ENCODE measurements at regions of chr6 and their contacts with region 1.

Region 1: DNA sequence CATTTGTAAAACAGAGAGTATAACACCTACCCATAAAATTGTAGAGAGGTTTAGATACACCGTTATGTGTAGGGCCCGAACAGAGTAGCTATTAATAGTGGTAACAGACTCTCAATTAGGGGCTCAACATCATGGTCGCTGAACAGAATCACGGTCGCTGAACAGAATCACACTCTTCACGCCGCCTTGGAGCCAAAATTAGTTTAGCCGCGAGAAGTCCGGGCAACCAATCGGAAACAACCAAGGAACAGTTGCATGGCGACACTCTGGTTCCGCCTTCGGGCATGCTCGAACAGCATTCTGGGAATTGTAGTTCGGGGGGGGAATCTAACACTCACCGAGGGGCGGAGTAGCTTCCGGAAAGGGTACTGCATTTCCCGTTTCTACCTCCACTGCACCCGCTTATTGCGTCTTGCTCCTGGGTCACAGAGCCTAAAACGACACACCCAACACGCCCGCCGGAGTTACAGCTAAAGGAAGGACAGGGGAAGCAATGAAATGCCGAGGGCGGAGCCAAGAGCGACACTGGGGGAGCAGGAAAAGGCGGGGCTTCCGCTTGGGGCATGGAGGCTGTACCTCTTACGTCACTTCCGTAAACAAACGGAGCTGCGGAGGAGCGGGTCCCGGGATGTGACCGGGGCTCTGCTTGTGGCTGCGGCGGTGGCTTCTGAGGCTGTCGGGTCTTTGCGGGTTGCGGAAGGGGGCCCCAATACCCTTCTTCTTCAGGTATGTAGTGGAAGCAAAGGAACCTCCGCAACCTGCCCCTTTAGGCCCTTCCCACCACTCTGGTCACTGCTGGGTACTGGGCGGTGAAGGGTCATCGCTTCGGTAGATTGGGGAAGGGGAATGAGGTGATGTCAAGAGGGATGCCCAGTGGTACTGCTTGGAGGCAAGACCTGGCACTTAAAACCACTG is at the start of gene CCDC28A:
- DNase-seq: peak; percentile 95
- total RNA-seq, gene CCDC28A: 25.8 and 27.9 TPM in 2 replicates

Region 2: GRCh38 chr6:138588805-138589434 is 184.5 kb before region 1 on chr6:
- in situ Hi-C with region 1: loop called (anchors 25 kb)
- DNase-seq: peak; percentile 86

Region 3: DNA sequence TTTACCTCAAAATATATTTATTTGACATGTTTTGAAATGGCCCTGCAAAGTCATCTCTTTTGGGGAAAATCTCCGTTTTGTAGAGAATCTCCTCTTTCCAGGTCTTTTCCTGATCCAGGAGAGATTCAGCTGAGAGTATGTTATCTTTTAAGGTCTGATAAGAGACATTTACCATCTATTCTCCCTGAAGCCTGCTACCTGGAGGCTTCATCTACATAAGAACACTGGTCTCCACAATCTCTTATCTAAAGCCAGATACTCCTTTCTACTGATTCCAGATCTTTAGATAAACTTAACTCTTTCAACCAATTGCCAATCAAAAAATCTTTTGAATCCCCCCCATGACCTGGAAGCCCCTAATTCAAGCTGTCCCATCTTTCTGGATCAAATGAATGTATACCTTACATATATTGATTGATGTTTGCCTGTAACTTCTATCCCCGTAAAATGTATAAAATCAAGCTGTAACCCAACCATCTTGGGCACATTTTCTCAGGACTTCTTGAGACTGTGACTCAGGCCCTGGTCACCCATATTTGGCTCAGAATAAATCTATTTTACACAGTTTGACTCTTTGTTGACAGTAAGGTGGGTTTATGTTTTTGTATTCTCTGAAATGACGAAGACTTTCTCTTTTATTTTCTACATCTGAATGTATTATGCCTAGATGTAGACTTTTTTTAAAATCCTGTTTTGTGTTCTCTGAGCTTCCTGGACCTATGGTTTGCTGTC is 118.0 kb after region 1 on chr6:
- in situ Hi-C with region 1: no loop called
- DNase-seq: no peak